Left colon (tissue), 2 donors: ENCODE measurements at regions of chr5 and their contacts with region 1.

Region 1: DNA sequence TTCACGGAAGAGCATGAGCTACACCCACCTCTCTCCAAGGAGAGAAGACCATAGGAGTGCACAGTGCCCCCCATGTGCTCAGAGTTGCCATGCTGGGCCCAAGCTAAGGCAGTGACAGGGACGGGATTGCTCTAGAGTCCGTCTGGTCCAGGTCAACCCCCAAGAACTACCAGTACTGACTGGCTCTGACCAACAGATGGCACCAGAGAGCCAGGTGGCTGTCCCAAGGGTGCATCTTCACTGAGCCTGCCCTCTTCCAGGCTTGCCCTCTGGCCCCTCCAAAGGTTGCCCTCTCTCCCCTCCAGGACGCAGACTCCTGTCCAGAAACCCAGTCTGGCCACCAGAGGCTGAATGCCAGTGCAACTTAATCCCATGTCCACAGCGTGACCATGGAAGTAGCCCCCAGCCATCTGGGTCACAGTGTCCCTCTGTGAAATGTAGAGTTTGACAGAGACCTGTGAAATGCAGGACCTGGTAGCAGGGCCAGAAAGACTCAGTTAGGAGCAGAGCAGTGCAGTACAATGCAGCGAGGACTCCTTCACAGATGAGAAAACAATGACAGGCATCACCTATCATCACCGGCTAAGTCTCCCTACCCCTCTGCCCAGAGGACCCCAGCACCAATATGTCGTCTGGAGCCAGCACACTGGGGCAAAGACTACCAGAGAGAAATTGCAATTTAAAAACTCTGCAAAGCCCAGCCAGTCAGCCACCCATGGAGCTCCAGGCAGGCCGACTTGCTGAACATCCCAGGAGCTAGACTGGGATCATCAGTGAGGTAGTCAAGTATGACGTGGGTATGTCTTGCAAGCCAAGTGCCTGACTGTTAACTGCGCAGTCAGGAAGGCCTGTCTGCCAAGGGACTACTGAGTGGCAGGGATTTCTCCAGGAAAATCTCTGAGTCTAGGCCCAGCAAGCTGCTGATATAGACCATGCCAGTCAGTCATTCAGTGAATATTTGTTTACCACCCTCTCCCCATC is 7.7 kb upstream of the SKP1 start:
- DNase-seq: peak; percentile 64 to 73
- ATAC-seq: peak; percentile 87

Region 2: DNA sequence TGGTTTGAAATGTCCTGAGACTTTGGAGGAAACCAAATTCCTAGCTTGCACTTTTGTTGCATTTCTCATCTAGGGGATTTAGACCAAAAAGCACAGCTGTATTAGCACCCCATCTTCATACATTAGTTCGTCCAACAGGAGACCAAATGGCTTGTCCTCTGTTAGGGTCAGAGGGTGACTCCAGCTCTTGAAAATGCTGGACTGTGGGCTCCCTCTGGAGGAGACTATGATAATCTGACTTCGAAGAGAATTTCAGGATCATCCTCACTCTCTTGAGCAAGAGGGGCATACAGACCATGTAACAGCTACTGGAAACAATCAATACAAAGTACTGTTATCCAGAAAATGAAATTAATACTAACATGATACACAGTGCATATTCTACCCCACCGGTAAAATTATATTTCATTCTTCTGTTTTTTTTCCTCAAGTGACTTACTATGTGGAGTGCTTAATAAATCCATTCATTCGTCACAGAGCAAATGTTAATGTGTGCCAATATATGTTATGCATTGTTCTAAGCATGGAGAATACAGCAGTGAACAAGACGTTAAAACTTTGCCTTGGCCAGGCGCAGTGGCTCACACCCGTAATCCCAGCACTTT is 105.2 kb after region 1 on chr5:
- intact Hi-C with region 1: loop called (anchors 5 kb)
- DNase-seq: peak; percentile 27 to 30
- ATAC-seq: peak; percentile 97